ENCODE measurements at regions of chr7 and their contacts with region 1.

Region 1: DNA sequence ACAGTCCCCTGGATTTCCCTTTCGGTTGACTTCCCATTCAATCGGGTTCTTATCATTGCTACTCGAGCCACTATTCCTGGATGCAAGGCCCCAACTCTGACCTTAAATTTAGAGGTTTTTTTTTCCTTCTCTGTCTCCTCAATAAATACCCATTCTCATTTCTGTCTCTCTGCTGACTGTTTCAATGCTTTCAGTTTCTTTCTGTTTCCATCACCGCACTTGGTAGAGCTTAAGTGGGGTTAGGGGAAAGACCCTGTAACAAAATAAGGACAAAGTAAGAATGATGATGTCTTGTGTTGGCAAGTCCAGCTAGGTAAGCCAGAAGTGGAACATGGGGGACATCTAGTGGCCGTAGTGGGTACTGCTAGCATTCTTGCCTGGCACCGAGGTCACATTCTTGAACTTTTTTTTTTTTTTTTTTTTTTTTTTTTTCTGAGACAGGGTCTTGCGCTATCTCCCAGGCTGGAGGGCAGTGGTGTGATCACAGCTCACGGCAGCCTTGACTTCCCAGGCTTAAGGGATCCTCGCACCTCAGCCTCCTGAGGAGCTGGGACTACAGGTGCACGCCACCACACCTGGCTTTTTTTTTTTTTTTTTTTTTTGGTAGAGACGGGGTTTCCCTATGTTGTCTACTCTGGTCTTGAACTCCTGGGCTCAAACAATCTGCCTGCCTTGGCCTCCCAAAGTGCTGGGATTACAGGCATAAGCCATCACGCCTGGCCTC is 40.3 kb downstream of the ZC3HC1 start:
- DNase-seq: peak; percentile 89
- H3K4me3 Mint-ChIP-seq: no peak overlapping the region
- H3K27ac Mint-ChIP-seq: peak overlapping the region; percentile 79
- H3K4me1 Mint-ChIP-seq: peaks cover 13% of the 10 kb centered on the region
- H3K27me3 Mint-ChIP-seq: no peaks in the 10 kb centered on the region

Region 2: DNA sequence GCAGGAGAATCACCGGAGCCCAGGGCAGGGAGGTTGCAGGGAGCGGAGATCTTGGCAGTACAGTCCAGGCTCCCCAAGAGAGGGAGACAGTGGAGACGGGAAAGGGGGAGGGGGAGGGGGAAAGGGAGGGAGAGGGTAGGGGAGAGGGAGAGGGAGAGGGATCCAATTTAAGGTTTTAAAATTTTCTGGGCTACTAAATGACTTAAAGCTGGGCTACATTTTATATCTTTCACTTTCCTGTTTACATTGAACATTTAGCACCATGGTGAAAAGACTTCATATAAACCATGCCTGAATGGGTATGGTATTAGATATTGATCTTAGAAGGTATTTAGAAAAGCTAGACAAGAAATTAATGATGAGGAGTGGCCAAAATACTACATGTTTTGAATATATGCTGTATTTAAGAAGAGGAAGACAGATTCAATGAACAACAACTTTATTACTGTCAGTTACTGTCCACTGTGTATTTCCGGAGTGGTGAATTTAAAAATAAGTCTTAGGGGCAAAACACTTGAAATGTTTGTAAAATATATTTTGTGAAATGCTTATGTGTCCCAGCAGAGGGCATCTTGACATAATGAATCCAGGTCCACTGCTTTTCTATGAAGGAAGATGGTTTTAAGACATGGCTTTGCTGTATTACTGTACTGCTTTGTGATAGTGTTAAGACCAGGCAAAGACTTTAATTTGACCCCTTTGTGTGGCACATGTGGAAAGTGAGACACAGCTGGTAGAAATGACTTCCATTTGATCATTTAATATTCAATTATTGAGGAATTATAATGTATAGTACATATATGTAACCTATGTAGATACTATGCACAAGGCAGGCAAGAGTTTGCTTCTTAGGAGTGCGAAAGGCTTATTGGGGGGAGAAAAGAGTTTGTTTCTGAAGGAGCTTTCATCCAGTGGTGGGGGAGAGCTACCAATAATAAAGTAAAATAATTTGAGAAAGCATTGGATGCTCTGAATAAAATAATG is 346.5 kb before region 1 on chr7:
- CTCF ChIA-PET with region 1: interaction called, 10 read pairs
- POLR2A ChIA-PET with region 1: no interaction called
- DNase-seq: no peak
- H3K4me3 Mint-ChIP-seq: no peak overlapping the region
- H3K27ac Mint-ChIP-seq: no peak overlapping the region
- H3K4me1 Mint-ChIP-seq: no peaks in the 10 kb centered on the region
- H3K27me3 Mint-ChIP-seq: no peaks in the 10 kb centered on the region

Region 3: GRCh38 chr7:129980667-129981066 is 30.2 kb before region 1 on chr7:
- CTCF ChIA-PET with region 1: interaction called, 10 read pairs
- POLR2A ChIA-PET with region 1: no interaction called
- DNase-seq: no peak
- H3K4me3 Mint-ChIP-seq: no peak overlapping the region
- H3K27ac Mint-ChIP-seq: no peak overlapping the region
- H3K4me1 Mint-ChIP-seq: peaks cover 7% of the 10 kb centered on the region
- H3K27me3 Mint-ChIP-seq: peaks cover 9% of the 10 kb centered on the region